ENCODE measurements at regions of chrX and their contacts with region 1.

Region 1: DNA sequence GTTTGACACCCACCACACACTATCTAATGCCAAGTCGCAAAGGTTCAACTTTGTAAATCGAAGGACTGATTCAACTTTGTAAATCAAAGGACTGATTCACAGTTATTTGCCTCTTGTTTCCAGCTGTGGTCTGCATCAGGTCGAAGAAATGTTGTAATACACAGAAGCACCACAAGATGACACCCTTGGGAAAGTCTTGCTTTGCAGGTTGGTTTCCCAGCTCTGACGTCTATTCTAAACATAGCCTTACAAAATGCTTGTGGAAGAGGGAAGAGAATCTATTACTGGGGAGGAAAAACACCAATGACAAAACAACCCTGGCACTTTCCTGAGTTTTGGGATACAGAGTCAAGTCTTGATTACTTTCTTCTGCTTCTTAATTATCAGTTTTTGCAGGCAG is 35.3 kb downstream of the SUPT20HL1 start:
- DNase-seq: peak; percentile 51
- CTCF ChIP-seq: peak; percentile 36

Region 2: DNA sequence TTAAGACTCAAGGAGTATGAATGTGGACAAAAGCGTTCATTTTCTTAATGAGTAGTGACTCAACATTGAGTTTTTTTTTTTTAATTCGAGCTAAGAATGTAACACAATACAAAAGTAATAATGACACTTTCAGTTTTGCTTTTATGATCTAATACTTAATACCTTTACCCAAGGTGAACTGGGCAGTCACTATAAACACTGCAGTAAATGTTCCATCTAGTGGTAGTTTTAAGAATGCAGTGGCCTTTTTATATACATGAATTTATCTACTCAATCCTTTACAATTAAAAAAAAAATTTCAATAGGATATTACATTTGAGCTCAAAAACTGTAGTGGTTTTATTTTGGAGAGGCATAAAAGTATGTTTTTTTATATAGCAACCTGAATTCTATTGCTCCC is 103.2 kb after region 1 on chrX:
- in situ Hi-C with region 1: loop called (anchors 10 kb)
- DNase-seq: peak; percentile 31
- CTCF ChIP-seq: peak; percentile 31

Region 3: DNA sequence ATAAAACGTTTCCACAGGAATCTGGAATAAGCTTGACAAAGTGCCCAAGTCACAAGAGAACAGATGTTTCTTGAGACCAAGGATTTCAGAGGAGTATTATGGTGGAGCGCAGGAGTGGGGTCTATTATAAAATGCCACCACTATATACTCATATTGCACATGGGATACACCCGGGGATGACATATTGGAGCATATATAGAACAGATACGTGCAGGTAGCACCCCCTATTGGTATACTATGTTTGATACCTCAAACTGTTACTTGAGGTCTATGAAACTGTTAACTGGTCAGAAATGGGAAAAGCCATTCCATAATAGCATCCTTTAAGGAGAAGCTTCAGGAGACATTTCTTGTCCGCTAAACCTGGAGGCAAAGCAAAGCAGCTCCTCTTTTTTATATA is 165.3 kb after region 1 on chrX:
- in situ Hi-C with region 1: loop called (anchors 25 kb)
- DNase-seq: peak; percentile 63
- CTCF ChIP-seq: no peak

Region 4: DNA sequence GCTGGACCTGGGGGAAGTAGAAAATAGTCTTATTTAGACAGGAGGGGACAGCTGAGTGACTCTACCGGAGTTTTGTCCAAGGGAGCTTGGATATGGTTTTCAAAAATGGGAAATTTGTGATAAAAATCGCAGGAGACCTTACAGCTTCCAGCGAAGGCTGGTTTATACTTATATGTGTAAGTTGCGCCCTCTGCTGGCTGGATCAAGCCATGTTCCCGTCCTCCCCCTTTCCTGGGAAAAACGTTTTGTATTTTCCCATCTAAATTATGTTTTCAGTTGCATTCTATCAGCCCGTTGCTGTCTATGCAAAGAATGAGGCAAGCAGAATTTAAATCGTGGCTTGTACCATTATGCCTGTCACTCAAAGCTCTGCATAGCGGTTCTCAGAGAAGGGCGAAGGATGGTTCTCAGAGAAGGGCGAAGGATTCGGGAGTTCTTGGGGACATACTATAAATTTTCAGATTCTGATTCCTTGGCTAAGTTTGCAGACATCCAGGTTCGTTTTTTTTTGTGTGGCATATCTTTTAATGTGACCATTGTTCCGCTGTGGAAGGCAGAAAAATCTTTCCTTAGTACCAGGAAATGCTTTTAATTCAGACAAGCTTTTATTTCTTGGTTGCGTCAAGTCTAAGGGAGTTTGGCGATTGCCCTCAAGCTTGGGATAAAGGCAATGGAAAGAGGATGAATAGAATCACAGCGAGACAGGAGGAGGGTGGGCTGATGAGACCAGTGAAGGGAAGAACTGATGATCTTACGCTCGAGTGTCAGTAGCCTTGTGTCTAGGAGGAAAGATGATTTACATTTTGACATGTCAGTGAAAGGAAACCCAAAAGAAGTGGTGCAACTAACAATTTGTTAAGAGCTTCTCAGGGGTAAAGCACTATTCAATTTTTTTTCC is 748.5 kb after region 1 on chrX:
- in situ Hi-C with region 1: loop called (anchors 25 kb)
- DNase-seq: peak; percentile 21
- CTCF ChIP-seq: peak; percentile 59

Measured in GM13976 (cell line).